ENCODE measurements at regions of chr7 and their contacts with region 1.

Region 1: DNA sequence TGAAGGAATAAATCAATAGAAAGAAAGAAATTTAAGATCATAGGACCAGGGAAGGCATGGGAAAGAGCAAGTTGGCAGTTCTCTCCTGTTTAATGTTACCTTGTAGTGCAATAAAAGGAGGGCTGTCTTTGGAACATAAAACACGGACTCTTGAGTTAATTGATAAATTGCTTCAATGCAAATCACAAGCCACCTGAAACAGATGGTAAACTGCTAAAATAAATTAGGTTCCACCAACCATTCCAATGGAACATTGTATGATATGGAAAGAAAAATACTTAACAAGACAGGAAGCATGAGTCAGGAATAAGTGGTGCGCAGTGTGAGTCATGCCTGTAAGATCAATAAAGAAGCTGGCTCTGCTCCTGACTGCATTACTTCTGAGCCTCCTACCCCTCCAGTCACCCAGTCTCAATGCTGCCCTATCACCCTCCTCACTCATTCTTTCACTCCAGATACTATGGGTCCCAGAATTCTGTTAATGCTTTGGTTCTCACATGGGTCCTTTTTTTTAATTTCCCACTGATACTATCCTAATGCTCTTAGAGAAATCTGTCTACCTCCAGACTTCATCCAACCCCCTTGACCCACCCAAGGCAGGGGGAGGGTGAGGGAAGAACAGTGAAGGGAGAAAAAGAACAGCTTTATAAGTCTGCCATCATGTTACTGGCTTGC is 78.9 kb downstream of the LRRC17 start:
- DNase-seq: no peak
- ATAC-seq: peak in 2 of 4 donors; percentile 44 to 48
- H3K4me3 ChIP-seq: no peak overlapping the region
- H3K27ac ChIP-seq: peak overlapping the region in 7 of 12 donors; percentile 44 to 77 (median 55)
- H3K4me1 ChIP-seq: peaks cover 0 to 49% (median 2%) of the 10 kb centered on the region in 12 donors
- H3K27me3 ChIP-seq: no peaks in the 10 kb centered on the region
- CTCF ChIP-seq: no peak
- POLR2A ChIP-seq: no peak

Region 2: DNA sequence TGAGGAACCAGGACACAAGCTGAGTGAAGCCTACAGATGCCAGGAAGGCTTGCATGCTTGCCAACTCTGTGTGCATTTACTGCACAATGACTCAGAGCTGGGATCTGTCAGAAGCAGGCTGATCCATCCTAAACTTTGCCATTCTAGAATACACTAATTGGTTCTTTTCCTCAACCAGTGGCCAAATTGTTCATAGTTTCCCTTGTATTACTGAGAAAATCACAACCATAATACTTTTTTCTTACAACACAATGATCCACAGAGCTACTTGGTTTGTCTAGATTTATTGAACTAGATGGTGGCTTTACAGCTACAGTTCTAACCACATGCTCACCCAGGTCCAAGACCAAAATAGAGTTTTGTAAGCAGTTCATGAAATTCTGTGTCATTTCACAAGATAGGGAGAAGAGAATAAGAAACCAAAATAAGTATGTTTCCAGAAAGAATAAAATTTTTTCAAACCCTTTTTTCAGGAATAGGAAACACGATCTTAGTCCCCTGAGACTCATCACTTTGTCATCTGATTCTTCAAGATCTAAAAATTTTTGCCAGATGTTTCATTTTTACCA is 99.9 kb before region 1 on chr7:
- intact Hi-C with region 1: loop called in 1 of 10 experiments (anchors 10 kb)
- DNase-seq: peak in 3 of 5 donors; percentile 32 to 49 (median 38)
- ATAC-seq: peak; percentile 49 to 82 (median 72)
- H3K4me3 ChIP-seq: no peak overlapping the region
- H3K27ac ChIP-seq: peak overlapping the region in 6 of 12 donors; percentile 21 to 61 (median 50)
- H3K4me1 ChIP-seq: peaks cover 2 to 62% (median 19%) of the 10 kb centered on the region in 12 donors
- H3K27me3 ChIP-seq: no peaks in the 10 kb centered on the region
- CTCF ChIP-seq: no peak
- POLR2A ChIP-seq: no peak

Region 3: GRCh38 chr7:102912742-102913141 is 78.9 kb before region 1 on chr7 and contains the start of gene LRRC17:
- intact Hi-C with region 1: loop called in 1 of 10 experiments (anchors 10 kb)
- DNase-seq: peak in 3 of 5 donors; percentile 34 to 51 (median 36)
- ATAC-seq: peak; percentile 25 to 53 (median 44)
- H3K4me3 ChIP-seq: peak within 1 kb of the TSS in 10 of 12 donors; percentile 5 to 63 (median 43)
- H3K27ac ChIP-seq: peak within 1 kb of the TSS in 11 of 12 donors; percentile 2 to 66 (median 58)
- H3K4me1 ChIP-seq: peaks cover 0 to 27% (median 6%) of the 10 kb centered on the region in 12 donors
- H3K27me3 ChIP-seq: no peaks in the 10 kb centered on the region
- CTCF ChIP-seq: no peak
- POLR2A ChIP-seq: no peak
- total RNA-seq, gene LRRC17: 0.72 to 10.8 (median 4.1) TPM

Measured in heart left ventricle (tissue), 16 donors.